ENCODE measurements at regions of chr9 and their contacts with region 1.

Region 1: DNA sequence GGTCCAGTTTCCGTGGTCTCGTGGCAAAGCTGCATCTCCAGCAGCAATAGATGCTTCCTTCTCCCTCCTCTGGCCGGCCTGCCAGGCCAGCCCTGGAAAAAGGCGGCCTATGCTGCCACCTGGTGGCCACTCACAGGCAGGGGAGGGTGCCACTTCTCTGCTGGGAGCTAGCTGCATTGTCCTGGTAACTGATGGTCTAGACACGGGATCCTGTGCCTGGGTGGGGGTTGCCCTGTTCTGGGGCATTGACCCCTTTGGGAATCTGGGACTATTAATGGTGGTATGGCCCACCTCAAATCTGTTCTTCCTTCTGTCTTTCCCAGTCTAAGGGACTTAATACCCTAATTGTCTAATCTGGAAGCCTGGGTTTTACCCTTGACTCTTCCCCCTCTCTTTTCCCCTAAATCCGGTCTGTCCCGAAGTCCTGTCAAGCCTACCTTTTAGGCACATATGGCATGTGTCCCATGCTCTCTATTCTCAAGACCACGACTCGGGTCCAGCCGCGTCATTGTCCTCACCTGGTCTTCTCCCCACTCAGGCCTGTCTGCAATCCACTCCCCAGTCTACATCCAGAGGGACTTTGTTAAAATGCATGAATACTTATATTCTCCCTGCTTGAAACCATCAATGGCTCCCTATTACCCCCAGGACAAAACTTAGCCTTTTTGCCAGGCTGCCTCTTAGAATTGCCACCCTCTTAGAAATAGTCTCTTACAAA is 20.0 kb upstream of the PTGS1 start:
- DNase-seq: peak; percentile 85
- H3K4me3 ChIP-seq: no peak overlapping the region
- H3K27ac ChIP-seq: no peak overlapping the region
- H3K4me1 ChIP-seq: peaks cover 8 to 21% (median 17%) of the 10 kb centered on the region in 4 donors
- H3K27me3 ChIP-seq: no peaks in the 10 kb centered on the region
- CTCF ChIP-seq: peak; percentile 91 to 98 (median 96)
- EP300 ChIP-seq: no peak
- POLR2A ChIP-seq: no peak

Region 2: GRCh38 chr9:120698766-120699165 is 1652.0 kb before region 1 on chr9:
- in situ Hi-C with region 1: no loop called
- intact Hi-C with region 1: loop called (anchors 5 kb)
- DNase-seq: no peak
- H3K4me3 ChIP-seq: no peak overlapping the region
- H3K27ac ChIP-seq: no peak overlapping the region
- H3K4me1 ChIP-seq: peaks cover 0 to 4% (median 0%) of the 10 kb centered on the region in 4 donors
- H3K27me3 ChIP-seq: no peaks in the 10 kb centered on the region
- CTCF ChIP-seq: no peak
- EP300 ChIP-seq: no peak
- POLR2A ChIP-seq: no peak

Region 3: GRCh38 chr9:122453677-122454135 is 102.9 kb after region 1 on chr9:
- in situ Hi-C with region 1: loop called in 1 of 4 experiments (anchors 10 kb)
- intact Hi-C with region 1: no loop called
- DNase-seq: no peak
- H3K4me3 ChIP-seq: no peak overlapping the region
- H3K27ac ChIP-seq: no peak overlapping the region
- H3K4me1 ChIP-seq: no peaks in the 10 kb centered on the region
- H3K27me3 ChIP-seq: no peaks in the 10 kb centered on the region
- CTCF ChIP-seq: no peak
- EP300 ChIP-seq: no peak
- POLR2A ChIP-seq: no peak